B cell (primary cell): ENCODE measurements at regions of chr14 and their contacts with region 1.

Region 1: DNA sequence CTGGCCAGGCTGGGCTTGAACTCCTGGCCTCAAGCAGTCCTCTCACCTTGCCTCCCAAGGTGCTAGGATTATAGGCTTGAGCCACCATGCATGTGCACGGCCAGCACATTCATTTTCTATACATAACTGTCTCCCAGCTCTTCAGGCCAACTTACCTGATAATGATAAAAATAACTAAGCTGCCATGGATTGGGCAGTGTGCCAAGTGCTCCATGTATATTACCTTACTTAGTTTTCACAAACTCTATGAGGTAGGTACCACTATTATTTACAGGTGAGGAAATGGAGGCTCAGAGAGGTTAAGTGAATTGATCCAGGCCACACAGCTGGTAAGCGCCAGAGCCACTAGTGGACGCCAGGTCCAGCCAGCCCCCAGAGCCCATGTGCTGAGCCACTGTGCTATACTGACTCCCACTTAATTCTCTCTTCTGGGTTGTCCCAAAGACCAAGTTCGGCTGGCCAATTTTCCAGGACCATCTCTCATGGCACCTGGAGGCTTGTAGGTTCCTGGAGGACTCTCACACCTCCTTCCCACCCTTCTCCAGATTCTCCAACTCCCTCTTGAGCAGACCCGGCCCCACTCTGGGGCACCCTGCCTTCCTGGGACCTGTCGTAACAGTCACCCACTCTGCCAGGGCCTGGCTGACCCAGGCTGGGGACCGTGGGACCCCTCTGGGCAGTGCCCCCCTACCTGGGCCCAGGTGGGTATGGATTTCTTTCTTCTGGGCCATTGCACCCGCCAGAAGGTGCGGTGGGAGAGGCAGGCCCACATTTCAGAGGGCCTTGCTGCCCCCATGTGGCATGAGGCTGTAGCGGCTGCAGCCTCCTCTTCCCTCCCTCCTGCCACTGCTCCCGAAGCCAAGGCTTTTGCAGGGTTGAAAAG is 30.2 kb upstream of the CIPC start:
- DNase-seq: peak; percentile 69
- ATAC-seq: peak; percentile 66
- H3K4me3 ChIP-seq: no peak overlapping the region
- H3K4me3 Mint-ChIP-seq: no peak overlapping the region
- H3K27ac ChIP-seq: no peak overlapping the region
- H3K27ac Mint-ChIP-seq: no peak overlapping the region
- H3K4me1 ChIP-seq: peaks cover 22 to 32% of the 10 kb centered on the region in 2 donors
- H3K4me1 Mint-ChIP-seq: peaks cover 24% of the 10 kb centered on the region
- H3K27me3 ChIP-seq: peaks cover 0 to 22% (median 3%) of the 10 kb centered on the region in 4 experiments
- H3K27me3 Mint-ChIP-seq: no peaks in the 10 kb centered on the region
- CTCF ChIP-seq: peak; percentile 76

Region 2: GRCh38 chr14:76876076-76876475 is 191.8 kb before region 1 on chr14:
- CTCF ChIA-PET with region 1: interaction called, 489 read pairs
- POLR2A ChIA-PET with region 1: interaction called, 5 read pairs
- intact Hi-C with region 1: loop called (anchors 1 kb)
- DNase-seq: peak; percentile 68
- ATAC-seq: peak; percentile 55
- H3K4me3 ChIP-seq: no peak overlapping the region
- H3K4me3 Mint-ChIP-seq: no peak overlapping the region
- H3K27ac ChIP-seq: no peak overlapping the region
- H3K27ac Mint-ChIP-seq: no peak overlapping the region
- H3K4me1 ChIP-seq: no peaks in the 10 kb centered on the region
- H3K4me1 Mint-ChIP-seq: no peaks in the 10 kb centered on the region
- H3K27me3 ChIP-seq: peaks cover 0 to 3% (median 0%) of the 10 kb centered on the region in 4 experiments
- H3K27me3 Mint-ChIP-seq: peaks cover 4% of the 10 kb centered on the region
- CTCF ChIP-seq: peak; percentile 74

Region 3: DNA sequence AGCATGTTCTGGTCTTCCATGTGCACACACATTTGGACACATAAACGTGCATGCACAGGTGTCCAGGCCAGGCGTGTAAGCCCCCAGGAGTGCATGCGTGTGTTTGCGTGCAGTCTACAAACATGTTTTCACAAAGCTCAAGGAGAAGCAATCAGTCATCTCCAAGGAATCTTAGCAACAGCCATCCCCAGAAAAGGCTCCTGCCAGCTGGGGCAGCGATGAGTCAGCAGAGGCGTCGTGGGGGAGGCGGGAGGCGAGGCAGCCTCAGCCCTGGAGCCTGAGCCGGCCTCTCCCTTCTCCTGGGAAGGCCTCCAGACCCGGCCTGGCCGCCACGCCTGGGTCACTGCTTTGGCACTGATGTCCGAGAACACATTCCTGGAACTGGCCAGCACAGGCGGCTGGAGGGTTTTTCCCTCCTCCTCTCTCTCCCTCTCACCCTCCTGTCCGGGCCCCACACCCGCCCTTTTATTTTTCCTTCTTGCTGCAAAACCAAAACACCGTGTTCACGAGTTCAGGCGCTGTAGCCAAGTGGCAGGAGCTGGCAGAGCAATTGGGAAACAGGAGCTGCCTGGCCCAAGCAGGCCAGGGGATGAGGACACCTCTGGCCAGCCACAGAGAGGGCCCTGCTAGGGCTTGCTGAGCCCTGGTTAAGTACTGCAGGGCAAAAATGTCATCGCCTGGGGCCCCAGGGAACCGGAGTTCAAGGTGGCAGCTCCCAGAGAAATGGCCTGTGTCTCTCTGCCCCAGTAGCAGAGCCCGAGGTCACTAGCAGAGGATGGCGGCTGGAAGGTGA is 148.9 kb before region 1 on chr14:
- CTCF ChIA-PET with region 1: interaction called, 267 read pairs
- POLR2A ChIA-PET with region 1: interaction called, 4 read pairs
- intact Hi-C with region 1: no loop called
- DNase-seq: no peak
- ATAC-seq: no peak
- H3K4me3 ChIP-seq: no peak overlapping the region
- H3K4me3 Mint-ChIP-seq: no peak overlapping the region
- H3K27ac ChIP-seq: no peak overlapping the region
- H3K27ac Mint-ChIP-seq: no peak overlapping the region
- H3K4me1 ChIP-seq: peaks cover 24 to 25% of the 10 kb centered on the region in 2 donors
- H3K4me1 Mint-ChIP-seq: peaks cover 20% of the 10 kb centered on the region
- H3K27me3 ChIP-seq: peaks cover 0 to 33% (median 5%) of the 10 kb centered on the region in 4 experiments
- H3K27me3 Mint-ChIP-seq: peaks cover 22% of the 10 kb centered on the region
- CTCF ChIP-seq: no peak

Region 4: DNA sequence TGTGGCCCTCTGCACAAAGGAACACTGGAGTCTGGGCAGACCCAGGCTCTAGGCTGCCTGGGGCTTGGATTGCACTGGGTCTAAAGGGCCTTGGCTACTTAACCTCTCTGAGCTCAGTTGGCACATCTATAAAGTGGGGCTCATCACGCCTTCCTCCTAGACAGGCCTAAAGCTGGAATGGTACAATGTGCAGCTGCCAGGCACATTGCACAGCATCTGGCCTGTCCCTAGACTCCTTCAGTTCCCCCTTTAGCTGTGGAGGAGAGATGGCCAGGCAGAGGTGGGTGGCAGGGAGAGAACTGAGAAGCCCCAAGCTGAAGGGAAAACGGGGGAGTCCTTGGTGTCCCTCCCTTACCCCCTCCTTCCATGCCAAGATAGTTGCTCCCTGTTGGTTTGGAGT is 50.2 kb before region 1 on chr14:
- CTCF ChIA-PET with region 1: no interaction called
- POLR2A ChIA-PET with region 1: no interaction called
- intact Hi-C with region 1: no loop called
- DNase-seq: no peak
- ATAC-seq: no peak
- H3K4me3 ChIP-seq: no peak overlapping the region
- H3K4me3 Mint-ChIP-seq: no peak overlapping the region
- H3K27ac ChIP-seq: no peak overlapping the region
- H3K27ac Mint-ChIP-seq: no peak overlapping the region
- H3K4me1 ChIP-seq: peaks cover 0 to 5% of the 10 kb centered on the region in 2 donors
- H3K4me1 Mint-ChIP-seq: peaks cover 6% of the 10 kb centered on the region
- H3K27me3 ChIP-seq: no peaks in the 10 kb centered on the region
- H3K27me3 Mint-ChIP-seq: no peaks in the 10 kb centered on the region
- CTCF ChIP-seq: no peak

Region 5: DNA sequence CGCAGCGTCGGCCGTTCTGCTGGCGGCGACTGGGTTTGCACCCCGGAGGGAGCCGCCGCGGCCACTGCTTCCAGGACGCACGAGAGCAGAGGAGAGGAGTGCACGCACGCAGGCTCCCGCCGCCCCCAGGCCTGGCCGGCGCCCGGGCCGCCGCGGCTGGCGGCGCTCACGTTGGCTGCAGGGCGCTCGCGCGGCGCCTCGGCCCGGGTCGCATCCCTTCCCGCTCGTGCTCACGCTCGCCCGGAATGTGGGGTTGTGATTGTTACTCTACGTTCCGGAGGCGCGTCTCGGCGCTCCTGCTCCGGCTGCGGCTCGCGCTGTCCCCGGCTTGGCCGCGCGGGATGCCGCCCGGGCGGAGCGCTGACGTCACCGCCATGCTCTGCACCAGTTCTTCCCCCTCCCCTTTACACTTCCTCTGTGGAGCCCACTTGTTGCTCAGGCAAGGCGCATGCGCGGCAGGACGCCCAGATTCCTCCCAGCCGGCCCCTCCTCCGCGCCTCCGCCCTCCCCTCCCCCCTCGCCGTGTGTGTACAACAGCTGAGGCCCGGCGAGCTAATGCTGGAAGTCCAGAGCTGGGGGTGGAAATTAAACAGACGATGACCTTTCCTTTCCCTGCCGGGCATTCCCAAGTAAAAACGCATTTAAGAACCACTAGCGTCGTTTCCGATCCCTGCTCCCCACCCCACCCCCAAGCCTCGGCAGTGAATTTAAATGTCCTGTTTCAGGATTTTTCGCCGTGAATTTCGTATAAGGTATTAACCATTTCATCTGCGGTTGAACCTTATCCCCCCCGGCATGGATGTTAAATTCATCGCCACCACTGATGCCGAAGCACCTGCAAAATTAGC is 39.3 kb before region 1 on chr14 and contains the start of gene IRF2BPL:
- CTCF ChIA-PET with region 1: interaction called, 20 read pairs
- POLR2A ChIA-PET with region 1: interaction called, 5 read pairs
- intact Hi-C with region 1: no loop called
- DNase-seq: peak; percentile 97
- ATAC-seq: peak; percentile 70
- H3K4me3 ChIP-seq: peak within 1 kb of the TSS; percentile 11 to 95 (median 82)
- H3K4me3 Mint-ChIP-seq: peak within 1 kb of the TSS; percentile 92
- H3K27ac ChIP-seq: peak within 1 kb of the TSS; percentile 96 to 98
- H3K27ac Mint-ChIP-seq: peak within 1 kb of the TSS; percentile 99
- H3K4me1 ChIP-seq: peaks cover 39 to 47% of the 10 kb centered on the region in 2 donors
- H3K4me1 Mint-ChIP-seq: peaks cover 46% of the 10 kb centered on the region
- H3K27me3 ChIP-seq: no peaks in the 10 kb centered on the region
- H3K27me3 Mint-ChIP-seq: no peaks in the 10 kb centered on the region
- CTCF ChIP-seq: no peak
- total RNA-seq, gene IRF2BPL: 32.8 and 34.0 TPM in 2 replicates

Region 6: DNA sequence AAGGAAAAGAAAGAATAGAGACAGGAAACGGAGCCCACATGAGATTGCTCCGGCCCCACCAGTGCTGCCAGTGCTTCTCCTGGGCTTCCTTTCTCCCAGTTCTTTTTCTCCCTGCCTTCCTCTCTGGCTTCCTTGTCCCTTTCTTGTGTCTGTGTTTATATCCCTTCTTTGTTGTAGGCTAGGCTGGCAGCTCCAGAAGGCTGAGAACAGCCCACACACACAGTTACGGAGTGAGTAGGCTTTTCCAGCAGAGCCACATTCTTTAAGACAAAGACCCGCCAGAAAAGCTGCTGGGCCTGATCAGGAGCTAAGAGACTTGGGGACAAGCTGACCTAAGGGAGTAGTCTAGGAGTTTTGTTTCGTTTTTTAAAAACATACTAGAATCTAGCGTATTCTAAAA is 43.2 kb after region 1 on chr14:
- CTCF ChIA-PET with region 1: interaction called, 16 read pairs
- POLR2A ChIA-PET with region 1: no interaction called
- intact Hi-C with region 1: no loop called
- DNase-seq: no peak
- ATAC-seq: no peak
- H3K4me3 ChIP-seq: no peak overlapping the region
- H3K4me3 Mint-ChIP-seq: no peak overlapping the region
- H3K27ac ChIP-seq: no peak overlapping the region
- H3K27ac Mint-ChIP-seq: peak overlapping the region; percentile 26
- H3K4me1 ChIP-seq: peaks cover 4 to 5% of the 10 kb centered on the region in 2 donors
- H3K4me1 Mint-ChIP-seq: peaks cover 25% of the 10 kb centered on the region
- H3K27me3 ChIP-seq: no peaks in the 10 kb centered on the region
- H3K27me3 Mint-ChIP-seq: no peaks in the 10 kb centered on the region
- CTCF ChIP-seq: no peak